ENCODE measurements at regions of chr14 and their contacts with region 1.

Region 1: DNA sequence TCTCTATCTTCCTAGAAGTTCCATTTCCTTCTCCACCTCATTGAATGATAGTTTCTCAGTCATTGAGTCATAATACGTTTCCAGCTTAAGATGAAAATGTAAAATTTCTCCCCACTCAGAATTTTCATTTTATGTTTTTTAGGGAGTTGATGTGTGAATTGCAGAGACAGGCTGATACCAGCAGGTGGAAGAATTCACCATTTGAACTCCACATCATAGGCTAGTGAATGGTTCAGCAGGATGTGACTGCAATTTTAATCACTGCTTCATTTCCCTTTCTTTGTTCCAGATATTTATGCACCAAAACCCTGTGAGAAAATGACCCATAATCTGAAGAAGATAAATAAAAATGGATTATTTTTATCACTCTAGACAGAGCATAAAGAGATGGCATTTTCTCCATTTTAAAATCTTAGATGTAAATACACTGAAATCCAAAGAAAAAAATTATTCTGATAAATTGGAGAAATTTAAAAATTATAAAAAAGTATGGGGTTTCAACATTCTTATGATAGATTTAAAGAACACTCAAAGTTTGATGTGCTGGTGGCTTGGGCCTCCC is 10.6 kb upstream of the PYGL start:
- DNase-seq: peak; percentile 72
- H3K4me3 ChIP-seq: peak overlapping the region in 1 of 2 experiments; percentile 21; a peak in 1 of 4 replicates
- H3K27ac ChIP-seq: peak overlapping the region; percentile 78 to 99; a peak in 3 of 4 replicates
- H3K4me1 ChIP-seq: peaks cover 7 to 21% of the 10 kb centered on the region in 2 experiments
- H3K27me3 ChIP-seq: no peaks in the 10 kb centered on the region
- CTCF ChIP-seq: peak; percentile 82
- EP300 ChIP-seq: no peak
- RAD21 ChIP-seq: peak; percentile 85

Region 2: DNA sequence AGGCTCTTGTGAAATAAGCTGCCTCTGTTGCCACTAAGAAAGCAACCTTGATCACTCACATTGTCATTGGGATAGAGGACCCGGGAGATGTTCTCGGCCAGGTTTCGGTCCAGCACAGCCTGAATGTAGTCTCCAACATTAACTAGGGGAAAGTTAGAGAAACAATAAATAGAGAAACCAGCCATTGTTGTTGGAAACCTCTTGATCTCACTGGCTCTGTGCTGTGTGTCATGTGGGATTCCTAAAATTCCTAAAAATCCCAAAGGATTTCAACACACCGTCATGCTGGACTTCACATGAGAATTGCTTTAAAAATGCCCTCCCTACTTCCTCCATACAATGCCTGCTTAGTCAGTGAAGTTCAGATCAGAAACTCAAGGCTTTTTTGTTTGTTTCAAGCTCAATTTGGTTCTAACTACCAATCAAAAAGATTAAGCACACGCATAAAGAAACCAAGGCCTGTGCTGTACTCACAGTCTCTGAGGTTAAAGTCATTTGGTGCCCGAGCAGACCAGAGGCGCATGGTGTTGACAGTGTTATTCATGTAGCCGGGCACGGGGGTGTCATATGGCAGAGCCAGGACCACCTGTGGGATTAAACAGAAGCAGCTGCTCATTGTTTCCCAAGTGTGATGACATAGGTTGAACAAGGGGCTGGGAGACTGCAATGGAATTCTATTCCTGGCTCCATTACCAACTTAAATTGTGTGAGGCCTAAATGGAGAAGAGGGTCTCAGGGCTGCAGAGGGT is 34.2 kb before region 1 on chr14:
- CTCF ChIA-PET with region 1: no interaction called
- POLR2A ChIA-PET with region 1: no interaction called
- DNase-seq: no peak
- H3K4me3 ChIP-seq: no peak overlapping the region
- H3K27ac ChIP-seq: peak overlapping the region in 1 of 2 experiments; percentile 47; a peak in 2 of 4 replicates
- H3K4me1 ChIP-seq: peaks cover 0 to 7% of the 10 kb centered on the region in 2 experiments; a peak in 3 of 4 replicates
- H3K27me3 ChIP-seq: no peaks in the 10 kb centered on the region
- CTCF ChIP-seq: no peak
- EP300 ChIP-seq: no peak
- RAD21 ChIP-seq: no peak

Region 3: DNA sequence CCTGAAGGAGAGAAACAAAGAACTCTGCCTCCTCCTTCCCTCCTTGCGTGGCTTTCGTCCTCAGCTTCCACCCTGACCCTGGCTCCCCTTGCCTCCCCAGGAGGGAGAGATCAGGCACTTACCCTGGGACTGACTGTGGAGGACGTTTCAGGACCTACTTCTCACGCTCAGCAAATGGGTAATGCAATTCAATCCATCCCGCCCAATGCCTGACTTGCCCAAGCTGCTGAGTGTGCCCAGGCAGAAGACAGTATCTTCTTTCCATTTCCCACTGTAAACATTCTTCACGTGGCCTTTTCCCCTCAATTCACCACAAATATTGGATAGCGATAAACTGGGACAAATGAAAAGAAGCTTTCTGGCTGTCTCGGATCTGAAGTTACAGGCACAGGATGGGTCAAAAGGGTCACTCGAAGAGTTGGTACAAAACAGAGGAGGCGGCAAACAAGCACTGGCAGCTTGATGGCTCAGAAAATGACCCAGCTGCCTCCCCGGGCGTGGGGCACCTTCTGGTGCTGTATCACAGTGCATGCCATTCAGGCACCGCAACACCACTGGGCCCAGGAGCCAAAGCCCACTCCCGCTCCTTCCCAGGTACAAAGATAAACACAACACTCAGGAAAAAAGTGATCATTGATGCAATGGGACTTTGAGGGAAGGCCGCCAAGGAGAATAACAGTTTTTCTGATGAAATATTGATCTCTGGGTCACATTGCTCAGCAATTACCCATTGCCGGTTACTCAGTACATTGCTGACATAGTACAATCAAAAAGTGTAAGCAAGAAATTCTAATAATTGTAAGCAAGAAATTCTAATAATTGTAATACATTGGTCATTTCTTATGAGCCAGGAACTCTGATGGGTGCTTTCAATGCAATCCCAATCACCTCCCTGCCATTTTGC is 74.2 kb after region 1 on chr14:
- CTCF ChIA-PET with region 1: no interaction called
- POLR2A ChIA-PET with region 1: no interaction called
- DNase-seq: no peak
- H3K4me3 ChIP-seq: no peak overlapping the region
- H3K27ac ChIP-seq: no peak overlapping the region
- H3K4me1 ChIP-seq: no peaks in the 10 kb centered on the region
- H3K27me3 ChIP-seq: no peaks in the 10 kb centered on the region
- CTCF ChIP-seq: no peak
- EP300 ChIP-seq: no peak
- RAD21 ChIP-seq: no peak

Region 4: DNA sequence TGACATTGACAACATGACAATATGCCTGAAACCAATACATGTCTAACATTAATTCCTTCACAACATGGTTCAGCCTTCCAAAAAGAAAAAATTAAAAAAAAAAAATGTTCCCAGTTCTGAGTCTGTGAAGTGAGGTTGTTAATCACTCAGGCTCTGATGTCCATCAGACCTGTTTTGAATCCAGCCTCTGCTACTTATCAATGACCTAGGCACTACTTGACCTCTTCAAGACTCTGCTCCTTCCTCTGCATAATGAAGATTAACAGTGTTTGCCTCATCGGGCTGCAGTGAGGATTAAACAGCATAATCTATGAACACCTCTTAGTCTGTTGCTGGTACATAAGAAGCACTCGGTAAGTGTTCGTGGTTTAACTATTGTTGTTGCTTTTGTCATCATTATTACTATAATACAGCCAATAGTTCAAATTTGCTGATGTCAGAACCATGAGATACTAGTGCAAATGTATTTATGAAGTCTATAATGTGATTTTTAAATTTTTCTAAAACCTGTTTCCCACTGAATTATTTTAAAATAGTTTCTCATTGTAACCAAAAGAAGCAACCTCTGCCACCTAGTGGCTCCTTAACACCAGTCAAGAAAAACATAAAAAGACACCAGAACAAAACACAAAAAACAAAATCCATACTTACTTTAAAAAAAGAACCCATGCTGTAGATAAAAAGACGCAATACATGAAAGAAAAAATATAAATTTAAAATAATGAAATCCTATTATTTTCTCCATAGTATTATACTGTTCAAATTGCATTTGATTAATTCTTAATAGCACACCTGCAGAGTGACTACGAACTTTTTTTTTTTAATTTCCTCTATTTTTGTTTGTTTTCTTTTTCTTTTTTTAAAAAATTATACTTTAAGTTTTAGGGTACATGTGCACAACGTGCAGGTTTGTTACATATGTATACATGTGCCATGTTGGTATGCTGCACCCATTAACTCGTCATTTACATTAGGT is 264.9 kb after region 1 on chr14:
- CTCF ChIA-PET with region 1: interaction called, 23 read pairs
- POLR2A ChIA-PET with region 1: no interaction called
- DNase-seq: no peak
- H3K4me3 ChIP-seq: no peak overlapping the region
- H3K27ac ChIP-seq: no peak overlapping the region
- H3K4me1 ChIP-seq: no peaks in the 10 kb centered on the region
- H3K27me3 ChIP-seq: no peaks in the 10 kb centered on the region
- CTCF ChIP-seq: peak; percentile 84
- EP300 ChIP-seq: no peak
- RAD21 ChIP-seq: peak; percentile 80